Activated CD4-positive, alpha-beta memory T cell treated with anti-CD3 and anti-CD28 coated beads, Interleukin-2, amount 10 ng/mL, durations not matched to agents 7 days and 5 days (primary cell): ENCODE measurements at regions of chr10 and their contacts with region 1.

Region 1: GRCh38 chr10:72319416-72320254 is 35.1 kb downstream of the DNAJB12 start:
- DNase-seq: peak; percentile 92
- H3K4me3 Mint-ChIP-seq: peak overlapping the region; percentile 76
- H3K27ac Mint-ChIP-seq: peak overlapping the region; percentile 98
- H3K4me1 Mint-ChIP-seq: peaks cover 81% of the 10 kb centered on the region
- H3K27me3 Mint-ChIP-seq: no peaks in the 10 kb centered on the region

Region 2: DNA sequence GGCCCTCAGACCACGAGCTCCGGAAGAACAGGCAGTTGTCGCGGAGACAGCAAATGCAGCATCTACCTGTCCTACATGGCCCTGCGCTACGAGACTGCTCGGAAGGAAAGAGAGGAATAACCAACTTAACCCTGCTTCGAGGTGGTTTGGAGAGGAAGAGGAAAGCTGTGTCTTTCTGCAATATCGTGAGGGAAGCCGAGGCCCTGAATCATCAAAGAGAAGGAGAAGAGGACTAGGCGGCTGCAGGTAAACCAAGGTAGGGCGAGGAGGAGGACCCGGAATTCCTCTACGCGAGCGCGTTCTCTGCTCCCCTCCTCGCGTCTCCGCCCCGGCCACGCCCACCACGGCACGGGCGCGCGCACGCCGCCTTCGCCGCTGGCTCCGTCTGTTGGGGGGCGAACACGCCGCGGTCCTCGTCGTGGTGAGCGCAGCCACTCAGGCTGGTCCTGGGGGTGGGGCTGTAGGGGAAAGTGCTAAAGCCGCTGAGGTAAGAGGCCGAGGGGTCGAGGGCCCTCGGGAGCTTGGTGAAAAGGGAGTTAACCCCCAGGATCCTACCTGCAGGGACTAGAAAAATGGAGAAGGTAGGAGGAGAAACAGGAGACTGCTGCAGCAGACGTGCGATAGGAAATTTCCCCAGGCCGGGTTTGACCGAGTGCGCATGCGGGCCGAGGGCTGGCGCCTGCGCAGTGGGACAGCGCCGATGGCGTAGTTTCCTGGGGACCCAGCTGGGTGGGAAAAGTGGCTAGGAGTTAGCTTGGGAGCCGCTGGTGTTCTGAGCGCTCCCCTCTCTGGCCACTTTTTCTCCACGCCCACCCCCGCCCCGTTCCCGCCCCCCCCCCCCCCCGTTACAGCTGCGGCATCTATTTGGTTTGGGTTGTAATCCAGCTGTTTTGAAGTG is 103.7 kb before region 1 on chr10 and contains the starts of genes ANAPC16 and ASCC1:
- CTCF ChIA-PET with region 1: no interaction called
- POLR2A ChIA-PET with region 1: interaction called, 23 read pairs
- DNase-seq: peak; percentile 94
- H3K4me3 Mint-ChIP-seq: peak within 1 kb of the TSS; percentile 98
- H3K27ac Mint-ChIP-seq: peak within 1 kb of the TSS; percentile 99
- H3K4me1 Mint-ChIP-seq: peaks cover 61% of the 10 kb centered on the region
- H3K27me3 Mint-ChIP-seq: no peaks in the 10 kb centered on the region
- total RNA-seq, gene ANAPC16: 94.2 to 101 TPM
- total RNA-seq, gene ASCC1: 35.5 to 36.2 TPM

Region 3: DNA sequence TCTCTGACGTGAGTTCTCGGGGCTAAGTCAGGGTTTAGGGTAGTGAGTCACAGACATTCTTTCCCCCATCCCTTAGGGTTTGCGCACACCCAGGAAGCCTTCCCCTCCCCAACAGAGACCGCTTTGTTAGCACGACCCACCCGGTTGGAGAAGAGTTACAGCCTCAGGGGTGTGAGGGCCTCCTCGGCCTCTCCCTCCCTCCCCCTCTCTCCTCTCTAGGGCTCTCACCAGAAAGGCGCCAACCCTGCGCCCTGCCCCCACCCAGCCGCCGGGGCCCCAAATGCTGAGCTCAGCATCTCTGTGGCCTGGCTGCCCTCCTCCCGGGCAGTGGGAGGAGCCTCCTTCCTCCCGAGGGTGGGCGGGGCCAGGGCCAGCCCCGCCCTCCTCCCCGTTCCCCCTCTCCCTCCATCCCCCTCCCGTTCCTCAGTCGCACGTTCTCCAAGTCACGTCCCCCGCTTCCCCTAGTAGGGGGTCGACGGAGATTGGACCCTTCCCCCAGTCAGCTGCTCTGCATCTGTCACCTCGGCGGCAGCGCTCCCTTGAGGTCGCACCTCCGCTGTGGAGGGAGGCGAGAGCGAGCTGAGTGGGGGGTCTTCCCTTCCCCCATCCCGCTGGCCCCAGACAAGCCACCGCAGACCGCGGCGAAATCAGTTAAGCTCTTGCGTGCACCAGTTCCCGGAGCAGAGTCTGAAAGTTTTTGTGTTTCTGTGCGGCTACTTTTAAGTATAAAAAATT is 58.9 kb before region 1 on chr10:
- CTCF ChIA-PET with region 1: interaction called, 4 read pairs
- POLR2A ChIA-PET with region 1: interaction called, 32 read pairs
- DNase-seq: peak; percentile 95
- H3K4me3 Mint-ChIP-seq: peak overlapping the region; percentile 79
- H3K27ac Mint-ChIP-seq: peak overlapping the region; percentile 98
- H3K4me1 Mint-ChIP-seq: peaks cover 65% of the 10 kb centered on the region
- H3K27me3 Mint-ChIP-seq: no peaks in the 10 kb centered on the region

Region 4: GRCh38 chr10:72292223-72292691 is 27.4 kb before region 1 on chr10:
- CTCF ChIA-PET with region 1: interaction called, 17 read pairs
- POLR2A ChIA-PET with region 1: interaction called, 448 read pairs
- DNase-seq: peak; percentile 60
- H3K4me3 Mint-ChIP-seq: peak overlapping the region; percentile 31
- H3K27ac Mint-ChIP-seq: peak overlapping the region; percentile 90
- H3K4me1 Mint-ChIP-seq: peaks cover 67% of the 10 kb centered on the region
- H3K27me3 Mint-ChIP-seq: no peaks in the 10 kb centered on the region

Region 5: DNA sequence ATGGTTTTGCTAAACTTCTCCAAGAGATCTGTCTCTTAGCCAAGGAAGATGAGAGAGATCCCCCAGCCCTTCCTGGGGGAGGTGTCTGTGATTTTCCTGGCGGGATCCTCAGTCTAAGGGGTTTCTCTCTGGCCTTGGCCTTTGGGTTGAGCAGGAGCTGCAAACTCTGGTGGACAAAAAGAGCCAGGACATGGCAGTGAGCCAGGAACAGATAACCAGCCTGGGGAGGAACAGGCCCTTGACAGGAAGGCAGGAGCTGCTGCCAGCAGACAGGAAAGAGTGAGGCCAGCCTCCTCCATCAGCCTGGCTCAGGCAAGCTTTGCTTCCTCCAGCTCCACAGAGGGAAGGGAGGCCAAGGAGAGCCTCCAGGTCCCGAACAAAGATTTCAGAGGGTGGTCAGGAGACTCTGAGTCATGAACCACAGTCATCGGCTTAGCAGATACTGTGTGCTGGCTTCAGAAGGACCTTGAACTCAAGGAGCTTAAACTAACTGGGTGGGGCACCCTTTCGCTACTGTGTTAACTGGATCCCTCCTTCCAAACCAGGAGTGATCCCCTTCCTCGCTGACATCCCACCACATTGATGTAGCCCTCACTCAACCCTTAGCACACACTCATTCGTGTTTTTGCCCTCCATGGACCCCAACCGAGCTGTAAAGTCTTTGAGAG is 11.2 kb before region 1 on chr10:
- CTCF ChIA-PET with region 1: interaction called, 14 read pairs
- POLR2A ChIA-PET with region 1: interaction called, 448 read pairs
- DNase-seq: peak; percentile 55
- H3K4me3 Mint-ChIP-seq: no peak overlapping the region
- H3K27ac Mint-ChIP-seq: peak overlapping the region; percentile 76
- H3K4me1 Mint-ChIP-seq: peaks cover 67% of the 10 kb centered on the region
- H3K27me3 Mint-ChIP-seq: no peaks in the 10 kb centered on the region